CD4-positive, alpha-beta T cell (primary cell): ENCODE measurements at regions of chr1 and their contacts with region 1.

Region 1: DNA sequence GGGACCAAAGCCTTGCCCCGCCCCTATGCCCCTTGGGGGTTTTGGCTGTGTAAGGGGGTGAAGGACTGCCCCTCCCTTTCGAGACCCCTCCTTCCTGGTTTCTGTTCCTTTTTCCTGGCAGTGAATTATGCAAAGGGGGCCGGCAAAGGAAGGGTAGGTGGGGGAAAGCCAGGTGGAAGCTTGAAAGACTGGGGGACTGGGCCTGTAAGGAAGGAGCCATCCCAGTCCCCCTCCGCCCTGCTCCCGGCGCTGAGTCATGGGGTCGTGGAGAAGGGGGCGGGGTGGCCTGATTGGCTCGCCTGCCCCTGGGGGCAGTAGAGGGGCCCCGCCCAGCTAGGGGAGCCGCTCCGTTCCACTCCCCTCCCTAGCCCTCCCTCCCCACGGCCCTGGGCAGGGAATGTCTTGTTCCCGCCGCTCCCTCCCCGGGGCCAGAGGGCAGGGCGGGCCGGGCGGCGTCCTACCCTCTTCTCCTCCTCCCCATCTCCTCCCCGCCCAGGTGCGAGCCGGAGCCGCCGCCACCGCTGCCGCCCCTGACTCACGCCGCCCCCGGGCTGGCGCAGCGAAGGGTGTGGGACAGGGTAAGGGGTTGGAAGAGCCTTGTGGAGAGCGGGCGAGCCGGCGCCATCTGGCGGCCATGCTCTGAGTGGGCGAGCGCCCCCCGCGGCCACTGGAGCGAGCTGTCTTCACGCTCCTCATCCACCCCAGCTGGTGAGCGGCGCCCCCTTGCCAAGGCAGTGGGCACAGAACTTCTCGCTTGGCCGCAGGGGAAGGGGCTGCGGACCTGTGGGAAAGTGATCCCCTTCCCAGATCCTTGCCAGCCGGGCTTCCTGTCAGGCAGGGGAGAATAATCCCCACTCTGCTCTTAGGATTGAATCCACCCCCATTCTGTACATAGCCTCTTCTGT is 14.7 kb downstream of the ZBTB7B start:
- DNase-seq: peak; percentile 84 to 95 (median 88)
- ATAC-seq: peak; percentile 86
- H3K4me3 ChIP-seq: peak overlapping the region; percentile 45
- H3K4me3 Mint-ChIP-seq: peak overlapping the region; percentile 67
- H3K27ac ChIP-seq: peak overlapping the region; percentile 73 to 77
- H3K27ac Mint-ChIP-seq: peak overlapping the region; percentile 92
- H3K4me1 ChIP-seq: peaks cover 76% of the 10 kb centered on the region
- H3K4me1 Mint-ChIP-seq: peaks cover 76% of the 10 kb centered on the region
- H3K27me3 ChIP-seq: no peaks in the 10 kb centered on the region
- H3K27me3 Mint-ChIP-seq: no peaks in the 10 kb centered on the region
- CTCF ChIP-seq: peak; percentile 100

Region 2: GRCh38 chr1:154418062-154418921 is 599.0 kb before region 1 on chr1:
- CTCF ChIA-PET with region 1: no interaction called
- POLR2A ChIA-PET with region 1: no interaction called
- intact Hi-C with region 1: no loop called
- DNase-seq: peak in 7 of 14 experiments; percentile 27 to 63 (median 38)
- ATAC-seq: peak; percentile 30
- H3K4me3 ChIP-seq: no peak overlapping the region
- H3K4me3 Mint-ChIP-seq: peak overlapping the region; percentile 74
- H3K27ac ChIP-seq: peak overlapping the region; percentile 69 to 85
- H3K27ac Mint-ChIP-seq: peak overlapping the region; percentile 91
- H3K4me1 ChIP-seq: peaks cover 95% of the 10 kb centered on the region
- H3K4me1 Mint-ChIP-seq: peaks cover 90% of the 10 kb centered on the region
- H3K27me3 ChIP-seq: no peaks in the 10 kb centered on the region
- H3K27me3 Mint-ChIP-seq: no peaks in the 10 kb centered on the region
- CTCF ChIP-seq: no peak

Region 3: GRCh38 chr1:154773551-154773950 is 243.7 kb before region 1 on chr1:
- CTCF ChIA-PET with region 1: no interaction called
- POLR2A ChIA-PET with region 1: no interaction called
- intact Hi-C with region 1: no loop called
- DNase-seq: no peak
- ATAC-seq: no peak
- H3K4me3 ChIP-seq: no peak overlapping the region
- H3K4me3 Mint-ChIP-seq: no peak overlapping the region
- H3K27ac ChIP-seq: no peak overlapping the region
- H3K27ac Mint-ChIP-seq: no peak overlapping the region
- H3K4me1 ChIP-seq: no peaks in the 10 kb centered on the region
- H3K4me1 Mint-ChIP-seq: no peaks in the 10 kb centered on the region
- H3K27me3 ChIP-seq: no peaks in the 10 kb centered on the region
- H3K27me3 Mint-ChIP-seq: no peaks in the 10 kb centered on the region
- CTCF ChIP-seq: no peak

Region 4: DNA sequence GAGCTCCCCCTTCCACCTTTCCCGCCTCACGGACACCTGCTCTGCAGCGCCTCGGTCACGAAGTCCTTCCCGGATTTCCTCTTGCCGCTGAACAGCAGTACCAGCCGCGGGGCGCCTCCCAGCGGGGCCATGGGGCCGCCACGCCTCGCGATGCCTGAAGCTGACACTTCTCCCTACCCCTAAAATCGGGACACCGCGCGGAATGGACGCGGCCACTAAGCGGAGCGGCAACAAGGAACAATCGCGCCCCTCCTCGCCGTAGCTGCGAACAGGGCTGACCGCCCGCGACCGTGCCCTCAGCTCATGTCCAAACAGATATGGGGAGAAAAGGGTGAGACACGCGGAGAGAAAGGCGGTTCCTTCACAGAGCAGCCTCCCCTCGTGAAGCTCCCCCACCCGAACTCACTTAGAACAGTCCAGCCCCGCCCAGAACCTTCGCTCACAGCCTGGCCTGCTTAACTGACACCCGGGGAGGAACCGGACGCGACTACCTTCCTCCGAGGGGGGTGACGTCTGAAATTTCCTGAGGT is 80.7 kb before region 1 on chr1 and contains the start of gene PMVK:
- CTCF ChIA-PET with region 1: interaction called, 20 read pairs
- POLR2A ChIA-PET with region 1: interaction called, 24 read pairs
- intact Hi-C with region 1: no loop called
- DNase-seq: peak; percentile 90 to 98 (median 94)
- ATAC-seq: peak; percentile 79
- H3K4me3 ChIP-seq: peak within 1 kb of the TSS; percentile 86
- H3K4me3 Mint-ChIP-seq: peak within 1 kb of the TSS; percentile 90
- H3K27ac ChIP-seq: peak within 1 kb of the TSS; percentile 98 to 100
- H3K27ac Mint-ChIP-seq: peak within 1 kb of the TSS; percentile 98
- H3K4me1 ChIP-seq: peaks cover 58% of the 10 kb centered on the region
- H3K4me1 Mint-ChIP-seq: peaks cover 59% of the 10 kb centered on the region
- H3K27me3 ChIP-seq: no peaks in the 10 kb centered on the region
- H3K27me3 Mint-ChIP-seq: no peaks in the 10 kb centered on the region
- CTCF ChIP-seq: peak; percentile 51
- total RNA-seq, gene PMVK: 6.6 to 7.4 TPM

Region 5: GRCh38 chr1:154961497-154962262 is 55.6 kb before region 1 on chr1 and contains the start of gene PYGO2:
- CTCF ChIA-PET with region 1: interaction called, 62 read pairs
- POLR2A ChIA-PET with region 1: interaction called, 72 read pairs
- intact Hi-C with region 1: loop called (anchors 1 to 2 kb)
- DNase-seq: peak; percentile 65 to 91 (median 77)
- ATAC-seq: peak; percentile 72
- H3K4me3 ChIP-seq: peak within 1 kb of the TSS; percentile 68
- H3K4me3 Mint-ChIP-seq: peak within 1 kb of the TSS; percentile 99
- H3K27ac ChIP-seq: peak within 1 kb of the TSS; percentile 88 to 95
- H3K27ac Mint-ChIP-seq: peak within 1 kb of the TSS; percentile 98
- H3K4me1 ChIP-seq: peaks cover 58% of the 10 kb centered on the region
- H3K4me1 Mint-ChIP-seq: peaks cover 20% of the 10 kb centered on the region
- H3K27me3 ChIP-seq: no peaks in the 10 kb centered on the region
- H3K27me3 Mint-ChIP-seq: no peaks in the 10 kb centered on the region
- CTCF ChIP-seq: peak; percentile 60
- total RNA-seq, gene PYGO2: 30.3 to 32.8 TPM

Region 6: GRCh38 chr1:154982897-154983648 is 34.2 kb before region 1 on chr1 and contains the start of gene FLAD1:
- CTCF ChIA-PET with region 1: interaction called, 71 read pairs
- POLR2A ChIA-PET with region 1: interaction called, 52 read pairs
- intact Hi-C with region 1: loop called in 1 of 2 experiments (anchors 2 kb)
- DNase-seq: peak; percentile 85 to 99 (median 92)
- ATAC-seq: peak; percentile 99
- H3K4me3 ChIP-seq: peak within 1 kb of the TSS; percentile 64
- H3K4me3 Mint-ChIP-seq: no peak within 1 kb of the TSS
- H3K27ac ChIP-seq: peak within 1 kb of the TSS; percentile 13 to 54
- H3K27ac Mint-ChIP-seq: no peak within 1 kb of the TSS
- H3K4me1 ChIP-seq: peaks cover 28% of the 10 kb centered on the region
- H3K4me1 Mint-ChIP-seq: peaks cover 10% of the 10 kb centered on the region
- H3K27me3 ChIP-seq: no peaks in the 10 kb centered on the region
- H3K27me3 Mint-ChIP-seq: no peaks in the 10 kb centered on the region
- CTCF ChIP-seq: no peak
- total RNA-seq, gene FLAD1: 16.7 to 19.4 TPM

Region 7: DNA sequence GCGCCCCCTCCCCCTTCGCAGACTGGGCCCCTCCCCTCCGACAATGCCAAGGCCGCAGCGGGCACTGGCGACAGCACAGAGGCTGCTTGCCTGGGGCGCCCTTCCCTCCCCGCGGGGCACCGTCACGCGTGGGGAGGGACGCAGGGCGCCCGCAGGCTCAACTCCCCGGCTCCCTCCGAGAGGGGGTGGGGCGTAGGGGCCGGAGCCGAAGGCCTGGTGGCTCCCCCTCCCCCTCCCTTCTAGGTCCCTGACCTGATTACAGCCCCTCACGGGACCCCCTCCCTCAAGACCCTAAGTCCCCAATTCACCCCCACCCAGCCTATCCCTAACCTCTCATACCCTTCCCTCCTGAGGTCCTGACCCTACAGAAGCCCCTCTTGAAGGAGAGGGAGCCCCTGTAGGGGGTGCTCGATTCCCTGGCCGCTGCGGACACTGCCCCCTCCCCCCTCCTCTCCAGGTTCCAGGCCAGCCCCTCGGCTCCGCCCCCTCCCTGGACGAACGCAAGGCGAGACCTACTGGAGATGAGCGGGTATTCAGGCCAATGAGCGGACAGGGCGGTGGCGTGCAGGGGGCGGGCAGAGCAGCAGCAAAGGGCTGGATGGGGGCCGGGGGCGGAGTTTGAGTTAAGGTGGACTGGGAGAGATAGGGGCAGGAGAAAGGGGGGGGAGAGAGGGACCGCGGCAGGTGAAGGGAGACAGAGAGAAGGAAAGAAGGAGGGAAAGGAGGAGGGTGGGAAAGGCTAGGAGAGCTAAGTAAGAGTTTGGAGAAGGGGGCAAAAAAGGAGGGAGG is 15.4 kb before region 1 on chr1:
- CTCF ChIA-PET with region 1: interaction called, 159 read pairs
- POLR2A ChIA-PET with region 1: interaction called, 189 read pairs
- intact Hi-C with region 1: loop called (anchors 1 kb)
- DNase-seq: peak; percentile 94 to 99 (median 98)
- ATAC-seq: peak; percentile 73
- H3K4me3 ChIP-seq: peak overlapping the region; percentile 73
- H3K4me3 Mint-ChIP-seq: peak overlapping the region; percentile 99
- H3K27ac ChIP-seq: peak overlapping the region; percentile 92 to 96
- H3K27ac Mint-ChIP-seq: peak overlapping the region; percentile 90
- H3K4me1 ChIP-seq: peaks cover 80% of the 10 kb centered on the region
- H3K4me1 Mint-ChIP-seq: peaks cover 65% of the 10 kb centered on the region
- H3K27me3 ChIP-seq: no peaks in the 10 kb centered on the region
- H3K27me3 Mint-ChIP-seq: no peaks in the 10 kb centered on the region
- CTCF ChIP-seq: no peak

Region 8: GRCh38 chr1:155050560-155051341 is 33.5 kb after region 1 on chr1 and contains the start of gene ADAM15:
- CTCF ChIA-PET with region 1: interaction called, 15 read pairs
- POLR2A ChIA-PET with region 1: interaction called, 4 read pairs
- intact Hi-C with region 1: no loop called
- DNase-seq: peak; percentile 63 to 91 (median 74)
- ATAC-seq: peak; percentile 81
- H3K4me3 ChIP-seq: peak within 1 kb of the TSS; percentile 87
- H3K4me3 Mint-ChIP-seq: peak within 1 kb of the TSS; percentile 91
- H3K27ac ChIP-seq: peak within 1 kb of the TSS; percentile 55 to 61
- H3K27ac Mint-ChIP-seq: peak within 1 kb of the TSS; percentile 55
- H3K4me1 ChIP-seq: peaks cover 33% of the 10 kb centered on the region
- H3K4me1 Mint-ChIP-seq: peaks cover 26% of the 10 kb centered on the region
- H3K27me3 ChIP-seq: no peaks in the 10 kb centered on the region
- H3K27me3 Mint-ChIP-seq: no peaks in the 10 kb centered on the region
- CTCF ChIP-seq: peak; percentile 95
- total RNA-seq, gene ADAM15: 17.2 to 20.1 TPM